ENCODE measurements at regions of chr19 and their contacts with region 1.

Region 1: DNA sequence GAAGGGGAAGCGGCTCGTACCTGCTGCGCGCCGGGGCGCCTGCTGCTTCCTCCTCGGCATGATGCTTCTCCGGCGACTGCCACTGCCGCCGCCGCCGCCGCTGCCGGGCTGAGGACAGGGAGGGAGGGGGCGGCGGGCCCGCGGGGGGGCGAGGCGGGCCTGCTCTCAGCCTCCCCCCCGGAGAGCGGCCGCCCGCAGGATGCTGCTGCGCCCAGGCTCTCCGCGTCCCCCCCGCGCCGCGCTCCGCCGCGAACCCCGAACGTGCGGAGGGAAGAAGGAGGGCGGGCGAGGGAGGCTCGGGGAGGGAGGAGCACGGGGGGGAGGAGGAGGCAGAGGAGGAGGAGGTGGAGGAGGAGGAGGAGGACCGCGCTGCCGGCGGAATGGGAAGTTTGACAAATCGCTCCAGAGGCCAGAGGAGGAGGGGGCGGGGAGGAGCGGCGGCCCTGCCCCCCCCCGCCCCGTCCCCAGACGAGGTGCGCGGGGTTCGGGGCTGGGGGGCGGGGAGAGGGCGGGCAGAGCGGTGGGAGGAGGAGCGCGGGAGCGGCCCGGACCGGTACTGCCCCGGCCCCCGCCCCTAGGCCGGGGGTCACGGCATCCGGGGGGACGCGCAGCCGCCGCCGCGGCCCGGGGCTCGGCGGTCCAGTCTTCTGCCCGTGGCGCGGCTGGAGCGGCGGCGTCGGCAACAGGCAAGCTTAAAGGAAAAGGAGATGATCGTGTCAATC is at the start of gene TSHZ3:
- DNase-seq: no peak
- H3K4me3 Mint-ChIP-seq: peak within 1 kb of the TSS; percentile 78
- H3K27ac Mint-ChIP-seq: no peak within 1 kb of the TSS
- H3K4me1 Mint-ChIP-seq: peaks cover 13% of the 10 kb centered on the region
- H3K27me3 Mint-ChIP-seq: peaks cover 63% of the 10 kb centered on the region
- total RNA-seq, gene TSHZ3: 0.66 and 1.3 TPM in 2 replicates

Region 2: GRCh38 chr19:30374865-30375552 is 974.3 kb before region 1 on chr19:
- intact Hi-C with region 1: loop called (anchors 10 kb)
- DNase-seq: no peak
- H3K4me3 Mint-ChIP-seq: no peak overlapping the region
- H3K27ac Mint-ChIP-seq: no peak overlapping the region
- H3K4me1 Mint-ChIP-seq: no peaks in the 10 kb centered on the region
- H3K27me3 Mint-ChIP-seq: peaks cover 31% of the 10 kb centered on the region